ENCODE measurements at regions of chr1 and their contacts with region 1.

Region 1: GRCh38 chr1:56967900-56968832 is 2.4 kb upstream of the C8B start:
- DNase-seq: peak; percentile 85
- ATAC-seq: peak; percentile 89
- H3K4me3 Mint-ChIP-seq: no peak overlapping the region
- H3K27ac Mint-ChIP-seq: no peak overlapping the region
- H3K4me1 Mint-ChIP-seq: no peaks in the 10 kb centered on the region
- H3K27me3 Mint-ChIP-seq: 0 out of 2 replicates have a peak, but pooled peaks cover 4% of the 10 kb centered on the region
- CTCF ChIP-seq: peak; percentile 91

Region 2: DNA sequence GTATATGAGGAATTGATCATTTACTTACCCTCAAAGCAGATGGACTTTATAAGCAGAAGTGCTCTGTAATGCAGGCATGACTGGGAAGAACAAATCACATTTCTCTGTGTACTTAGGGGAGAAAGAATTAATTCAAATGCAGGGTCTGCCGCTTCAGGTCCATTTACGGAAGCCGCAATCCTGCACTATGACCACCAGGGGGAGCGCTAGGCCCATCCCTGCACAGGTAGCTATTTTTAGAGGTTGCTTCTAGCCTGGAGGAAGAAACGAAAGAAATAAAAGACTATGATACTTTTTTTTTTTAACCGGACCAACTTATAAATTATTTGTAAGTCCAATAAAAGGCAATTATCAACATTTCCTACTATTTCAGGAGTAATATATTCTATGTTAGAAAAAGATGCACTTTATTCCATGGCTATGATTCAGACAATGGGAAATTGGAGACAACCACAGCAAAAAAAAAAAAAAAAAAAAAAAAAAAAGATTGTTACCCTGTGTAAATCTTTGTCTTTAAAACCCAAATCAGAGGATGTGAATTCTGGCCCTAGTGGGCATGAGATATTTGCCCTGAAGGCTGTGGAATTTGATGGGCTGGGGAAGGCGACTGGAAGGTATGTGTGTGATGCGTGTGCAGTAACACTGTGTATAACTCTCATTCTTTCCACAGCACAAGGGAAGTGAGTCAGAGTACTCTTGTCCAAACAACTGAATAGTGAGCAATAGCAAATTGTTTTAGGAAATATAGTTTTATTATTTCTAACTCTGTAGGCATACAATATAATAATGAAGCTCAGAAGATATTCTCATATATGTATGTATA is 136.1 kb before region 1 on chr1:
- CTCF ChIA-PET with region 1: interaction called, 26 read pairs
- POLR2A ChIA-PET with region 1: no interaction called
- DNase-seq: peak; percentile 62
- ATAC-seq: peak; percentile 58; the same call in 1 of the 2 replicates
- H3K4me3 Mint-ChIP-seq: no peak overlapping the region
- H3K27ac Mint-ChIP-seq: no peak overlapping the region
- H3K4me1 Mint-ChIP-seq: peaks cover 3% of the 10 kb centered on the region
- H3K27me3 Mint-ChIP-seq: no peaks in the 10 kb centered on the region; the same call in none of the 2 replicates
- CTCF ChIP-seq: peak; percentile 93

Region 3: DNA sequence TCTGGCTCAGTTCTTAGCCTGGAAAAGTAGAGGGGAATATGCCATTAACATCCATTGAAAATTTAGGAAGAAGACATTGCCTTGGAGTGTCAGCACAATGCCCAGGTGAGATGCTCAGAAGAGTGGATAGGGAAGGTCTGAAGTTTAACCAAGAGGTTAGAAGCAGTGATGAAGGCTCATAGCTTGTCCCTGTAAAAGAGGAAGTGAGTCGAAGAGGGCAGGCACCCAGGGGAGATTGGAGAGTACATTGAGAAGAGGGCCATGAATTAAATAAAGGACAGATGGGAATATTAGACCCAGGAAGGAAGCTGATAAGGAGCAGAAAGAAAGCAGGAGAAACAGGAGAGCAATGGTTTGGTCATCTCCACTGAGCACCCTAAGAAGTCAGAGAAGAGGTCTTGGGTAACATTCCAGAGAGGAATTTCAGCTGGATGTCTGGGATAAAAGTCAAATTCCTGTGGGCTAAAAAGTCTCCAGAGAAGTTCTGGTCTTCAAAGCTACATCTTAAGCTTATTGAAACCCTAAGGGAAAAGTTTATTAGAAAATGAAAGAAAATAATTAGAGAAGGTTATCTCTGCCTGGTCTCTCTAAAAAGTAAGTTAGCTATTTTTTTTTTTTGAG is 19.7 kb before region 1 on chr1:
- CTCF ChIA-PET with region 1: no interaction called
- POLR2A ChIA-PET with region 1: no interaction called
- DNase-seq: no peak
- ATAC-seq: no peak
- H3K4me3 Mint-ChIP-seq: no peak overlapping the region
- H3K27ac Mint-ChIP-seq: no peak overlapping the region
- H3K4me1 Mint-ChIP-seq: no peaks in the 10 kb centered on the region
- H3K27me3 Mint-ChIP-seq: peaks cover 3% of the 10 kb centered on the region; the same call in 1 of the 2 replicates
- CTCF ChIP-seq: no peak

Region 4: GRCh38 chr1:57003398-57004139 is 35.4 kb after region 1 on chr1:
- CTCF ChIA-PET with region 1: no interaction called
- POLR2A ChIA-PET with region 1: no interaction called
- DNase-seq: no peak
- ATAC-seq: no peak
- H3K4me3 Mint-ChIP-seq: no peak overlapping the region
- H3K27ac Mint-ChIP-seq: no peak overlapping the region
- H3K4me1 Mint-ChIP-seq: no peaks in the 10 kb centered on the region
- H3K27me3 Mint-ChIP-seq: no peaks in the 10 kb centered on the region
- CTCF ChIP-seq: no peak

Region 5: GRCh38 chr1:57024855-57025254 is 56.7 kb after region 1 on chr1:
- CTCF ChIA-PET with region 1: no interaction called
- POLR2A ChIA-PET with region 1: no interaction called
- DNase-seq: no peak
- ATAC-seq: peak; percentile 57
- H3K4me3 Mint-ChIP-seq: no peak overlapping the region
- H3K27ac Mint-ChIP-seq: no peak overlapping the region
- H3K4me1 Mint-ChIP-seq: peaks cover 9% of the 10 kb centered on the region
- H3K27me3 Mint-ChIP-seq: peaks cover 2% of the 10 kb centered on the region; the same call in 1 of the 2 replicates
- CTCF ChIP-seq: no peak

Region 6: DNA sequence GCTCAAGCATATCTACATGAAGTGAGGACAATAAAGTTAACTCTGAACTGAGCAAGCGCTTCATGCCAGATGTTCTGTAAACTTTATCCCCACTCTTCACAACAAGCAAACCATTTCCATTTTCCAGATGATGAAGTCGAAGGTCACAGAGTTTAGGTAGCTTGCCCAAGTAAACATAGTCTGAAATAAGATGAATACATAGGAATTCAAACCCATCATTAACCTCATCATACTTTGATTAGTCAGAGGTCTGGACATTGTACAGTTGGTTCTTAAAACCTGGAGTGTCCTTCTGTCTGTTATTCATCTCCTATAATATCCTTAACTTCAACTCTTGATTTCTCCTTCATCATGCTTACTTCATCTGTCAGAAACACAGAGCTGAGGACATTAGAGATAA is 177.9 kb after region 1 on chr1:
- CTCF ChIA-PET with region 1: no interaction called
- POLR2A ChIA-PET with region 1: no interaction called
- DNase-seq: no peak
- ATAC-seq: no peak
- H3K4me3 Mint-ChIP-seq: no peak overlapping the region
- H3K27ac Mint-ChIP-seq: no peak overlapping the region
- H3K4me1 Mint-ChIP-seq: no peaks in the 10 kb centered on the region
- H3K27me3 Mint-ChIP-seq: no peaks in the 10 kb centered on the region
- CTCF ChIP-seq: no peak